ENCODE measurements at regions of chr12 and their contacts with region 1.

Region 1: DNA sequence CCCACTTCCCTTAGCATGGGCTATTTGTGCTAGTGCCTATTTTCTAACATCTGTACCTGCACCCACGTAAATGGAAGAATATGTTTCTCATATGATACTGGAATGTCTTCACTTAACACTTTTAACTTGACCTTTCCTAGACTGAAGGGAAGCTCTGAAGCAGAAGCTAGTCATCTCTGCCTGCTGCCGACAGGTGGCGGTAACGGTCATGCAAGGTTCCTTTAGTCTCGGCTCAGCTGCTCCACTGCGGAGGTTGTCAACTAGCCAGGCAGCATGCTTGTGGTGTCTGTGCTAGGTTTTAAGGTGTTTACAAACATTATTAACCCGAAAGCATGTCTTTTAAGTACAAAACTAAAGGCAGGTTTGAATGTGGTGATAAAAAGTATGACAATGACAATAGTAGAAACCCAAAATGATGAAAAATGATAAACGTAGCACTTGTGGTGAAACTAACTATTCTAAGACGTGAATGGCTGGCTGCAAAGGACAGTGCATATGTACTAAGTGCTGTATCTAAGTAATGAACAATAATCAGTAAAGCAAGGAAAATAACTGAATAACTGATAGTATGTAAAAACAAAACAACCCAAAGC is 117.2 kb downstream of the GRIN2B start:
- DNase-seq: no peak
- H3K4me3 ChIP-seq: no peak overlapping the region
- H3K27ac ChIP-seq: no peak overlapping the region
- H3K4me1 ChIP-seq: no peaks in the 10 kb centered on the region
- H3K27me3 ChIP-seq: no peaks in the 10 kb centered on the region
- CTCF ChIP-seq: peak in 2 of 3 experiments; percentile 53 to 65
- POLR2A ChIP-seq: no peak

Region 2: GRCh38 chr12:13635709-13636108 is 228.5 kb before region 1 on chr12:
- intact Hi-C with region 1: no loop called
- DNase-seq: no peak
- H3K4me3 ChIP-seq: no peak overlapping the region
- H3K27ac ChIP-seq: no peak overlapping the region
- H3K4me1 ChIP-seq: no peaks in the 10 kb centered on the region
- H3K27me3 ChIP-seq: no peaks in the 10 kb centered on the region
- CTCF ChIP-seq: no peak
- POLR2A ChIP-seq: no peak

Region 3: DNA sequence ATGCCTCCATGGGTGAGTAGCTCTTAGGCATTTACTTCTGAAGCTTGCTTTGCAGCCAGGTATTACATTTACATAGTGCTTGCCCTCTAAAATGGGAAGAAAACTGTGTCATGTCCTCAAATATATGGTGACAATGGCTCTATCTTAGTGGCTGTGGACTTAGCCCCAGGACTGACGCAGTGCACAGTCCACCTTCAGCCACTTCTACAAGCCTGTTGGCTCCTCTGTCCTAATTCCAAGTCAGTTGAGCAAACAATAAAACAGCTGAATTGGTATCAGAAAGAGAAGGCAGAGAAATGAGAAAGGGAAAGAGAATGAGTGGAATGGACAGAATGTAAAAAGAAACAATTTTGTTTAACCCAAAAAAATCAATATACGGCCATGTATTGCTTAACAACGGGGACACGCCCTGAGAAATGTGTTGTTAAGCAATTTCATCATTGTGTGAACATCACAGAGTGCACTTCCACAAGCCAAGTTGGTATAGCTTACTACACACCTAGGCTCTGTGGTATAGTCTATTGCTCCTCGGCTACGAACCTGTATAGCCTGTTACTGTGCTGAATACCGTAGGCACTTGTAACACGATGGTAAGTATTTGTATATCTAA is 23.7 kb after region 1 on chr12:
- intact Hi-C with region 1: no loop called
- DNase-seq: no peak
- H3K4me3 ChIP-seq: no peak overlapping the region
- H3K27ac ChIP-seq: no peak overlapping the region
- H3K4me1 ChIP-seq: no peaks in the 10 kb centered on the region
- H3K27me3 ChIP-seq: no peaks in the 10 kb centered on the region
- CTCF ChIP-seq: no peak
- POLR2A ChIP-seq: no peak

Region 4: DNA sequence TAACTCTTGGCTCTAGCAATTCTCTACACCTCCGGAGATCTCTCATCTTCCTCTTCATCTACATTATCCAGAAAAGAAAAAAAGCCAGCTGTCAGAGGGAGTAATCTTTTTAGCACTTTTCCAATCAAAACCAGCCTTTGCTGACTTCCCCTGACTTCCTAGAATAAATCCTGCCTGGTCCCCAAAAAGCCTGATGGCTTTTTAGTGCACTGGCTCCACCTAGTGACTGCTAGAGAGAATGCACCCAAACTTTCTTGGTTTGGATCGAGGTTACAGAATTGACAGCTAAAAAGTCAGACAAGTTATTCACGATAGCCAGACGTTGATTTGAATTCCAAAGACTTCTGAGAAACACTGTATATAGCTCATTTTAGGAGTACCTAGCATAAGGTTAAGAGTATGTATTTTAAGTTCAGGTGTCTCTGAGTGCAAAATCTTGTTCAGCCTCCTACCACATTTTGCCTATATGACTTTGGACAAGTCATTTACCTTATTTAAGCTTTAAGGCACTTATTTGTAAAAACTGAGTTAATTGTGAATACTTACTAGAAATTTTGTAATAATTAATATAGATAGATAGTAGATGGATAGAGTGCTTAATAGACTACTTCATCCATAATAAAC is 302.9 kb after region 1 on chr12:
- intact Hi-C with region 1: loop called (anchors 10 kb)
- DNase-seq: no peak
- H3K4me3 ChIP-seq: no peak overlapping the region
- H3K27ac ChIP-seq: no peak overlapping the region
- H3K4me1 ChIP-seq: no peaks in the 10 kb centered on the region
- H3K27me3 ChIP-seq: no peaks in the 10 kb centered on the region
- CTCF ChIP-seq: peak; percentile 26 to 84 (median 69)
- POLR2A ChIP-seq: no peak

Measured in vagina (tissue), 2 donors.